ENCODE measurements at regions of chr11 and their contacts with region 1.

Region 1: DNA sequence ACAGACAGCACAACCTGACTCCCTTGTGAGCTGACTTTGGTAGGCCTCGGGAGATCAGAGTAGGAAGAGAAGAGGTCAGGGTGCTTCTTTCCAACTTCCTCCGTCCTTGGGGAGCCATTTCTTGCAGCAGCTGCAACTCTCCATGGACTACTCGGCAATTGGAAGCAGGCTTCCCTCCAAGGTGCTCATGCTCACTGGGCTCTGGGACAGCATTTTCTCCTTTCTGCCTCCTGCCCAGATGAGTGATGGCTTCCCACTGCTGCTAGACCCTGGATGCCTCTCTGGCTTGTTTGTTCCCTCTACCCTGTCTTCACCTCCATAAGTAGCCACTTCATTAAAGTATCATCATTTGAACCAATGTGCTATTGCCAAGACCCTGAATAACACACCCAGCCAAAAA is 8.2 kb upstream of the PRSS23 start:
- DNase-seq: no peak
- ATAC-seq: no peak
- H3K4me3 Mint-ChIP-seq: no peak overlapping the region
- H3K27ac Mint-ChIP-seq: no peak overlapping the region
- H3K4me1 Mint-ChIP-seq: no peaks in the 10 kb centered on the region
- H3K27me3 Mint-ChIP-seq: peaks cover 3% of the 10 kb centered on the region
- CTCF ChIP-seq: no peak

Region 2: DNA sequence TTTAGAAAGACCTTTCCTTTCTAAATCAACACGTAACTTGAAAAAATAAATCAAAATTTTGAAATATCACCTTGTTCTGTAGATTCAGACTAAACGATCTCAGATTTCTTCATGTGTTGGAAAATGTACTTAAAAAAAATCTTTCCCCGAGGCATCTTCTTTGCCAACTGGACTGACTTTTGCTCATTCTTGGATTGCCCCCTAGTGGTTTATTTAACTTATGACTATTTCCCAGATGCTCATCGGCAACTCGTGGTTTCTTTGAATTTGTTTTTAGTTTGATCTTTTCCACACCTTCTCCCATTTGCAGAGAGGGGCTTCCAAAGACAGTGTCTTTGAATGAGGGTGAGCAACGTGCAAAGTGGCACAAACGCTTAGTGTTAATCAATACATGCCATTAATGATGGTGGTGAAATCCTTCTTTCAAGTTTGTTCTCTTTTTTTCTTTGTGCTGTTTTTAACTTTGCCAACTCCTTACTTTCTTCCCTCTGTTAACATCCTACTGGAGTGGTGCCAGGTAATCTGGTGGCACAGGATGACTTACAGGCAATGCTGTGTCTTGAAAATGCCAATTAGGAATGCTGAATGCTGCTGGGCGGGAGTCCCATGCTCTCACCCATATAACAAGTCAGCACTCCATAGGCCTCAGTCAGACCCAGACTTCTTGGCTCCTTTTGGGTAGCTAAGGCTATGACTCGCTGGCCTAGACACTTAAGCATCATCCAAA is 26.5 kb after region 1 on chr11:
- CTCF ChIA-PET with region 1: no interaction called
- POLR2A ChIA-PET with region 1: no interaction called
- intact Hi-C with region 1: no loop called
- DNase-seq: no peak
- ATAC-seq: no peak
- H3K4me3 Mint-ChIP-seq: no peak overlapping the region
- H3K27ac Mint-ChIP-seq: no peak overlapping the region
- H3K4me1 Mint-ChIP-seq: no peaks in the 10 kb centered on the region
- H3K27me3 Mint-ChIP-seq: peaks cover 12% of the 10 kb centered on the region
- CTCF ChIP-seq: no peak

Region 3: GRCh38 chr11:86999859-87000753 is 208.0 kb after region 1 on chr11:
- CTCF ChIA-PET with region 1: no interaction called
- POLR2A ChIA-PET with region 1: no interaction called
- intact Hi-C with region 1: no loop called
- DNase-seq: no peak
- ATAC-seq: no peak
- H3K4me3 Mint-ChIP-seq: no peak overlapping the region
- H3K27ac Mint-ChIP-seq: no peak overlapping the region
- H3K4me1 Mint-ChIP-seq: no peaks in the 10 kb centered on the region
- H3K27me3 Mint-ChIP-seq: peaks cover 3% of the 10 kb centered on the region
- CTCF ChIP-seq: no peak

Region 4: DNA sequence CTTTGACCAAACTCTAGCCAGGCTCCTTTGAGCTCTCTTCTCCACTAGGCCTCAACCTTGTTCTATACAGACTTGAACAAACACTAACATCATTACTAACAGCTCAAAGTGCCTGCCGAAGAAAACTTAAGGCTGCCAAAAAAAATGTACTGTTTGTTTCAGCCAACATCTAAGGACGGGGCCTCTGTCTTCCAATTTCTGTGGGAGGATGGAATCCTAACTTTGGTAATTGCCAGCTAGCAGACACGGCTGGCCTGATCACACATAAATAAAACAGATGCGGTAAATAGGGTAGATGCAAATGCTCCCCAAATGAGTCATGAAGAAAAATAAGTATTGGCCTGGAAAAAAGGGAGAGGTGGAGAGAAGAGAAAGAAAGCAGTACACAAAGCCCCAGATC is 639.9 kb after region 1 on chr11:
- CTCF ChIA-PET with region 1: no interaction called
- POLR2A ChIA-PET with region 1: interaction called, 10 read pairs
- intact Hi-C with region 1: no loop called
- DNase-seq: no peak
- ATAC-seq: no peak
- H3K4me3 Mint-ChIP-seq: no peak overlapping the region
- H3K27ac Mint-ChIP-seq: no peak overlapping the region
- H3K4me1 Mint-ChIP-seq: no peaks in the 10 kb centered on the region
- H3K27me3 Mint-ChIP-seq: no peaks in the 10 kb centered on the region
- CTCF ChIP-seq: no peak